Transverse colon (tissue), 4 donors: ENCODE measurements at regions of chr17 and their contacts with region 1.

Region 1: GRCh38 chr17:145671-146541 is 8.5 kb downstream of the SCGB1C2 start:
- DNase-seq: no peak
- H3K4me3 ChIP-seq: no peak overlapping the region
- H3K27ac ChIP-seq: no peak overlapping the region
- H3K4me1 ChIP-seq: peaks cover 0 to 3% (median 1%) of the 10 kb centered on the region in 4 donors
- H3K27me3 ChIP-seq: no peaks in the 10 kb centered on the region
- CTCF ChIP-seq: no peak
- EP300 ChIP-seq: no peak
- POLR2A ChIP-seq: no peak

Region 2: GRCh38 chr17:333626-334396 is 187.9 kb after region 1 on chr17:
- in situ Hi-C with region 1: no loop called
- intact Hi-C with region 1: no loop called
- DNase-seq: peak; percentile 67
- H3K4me3 ChIP-seq: peak overlapping the region in 1 of 4 donors; percentile 29
- H3K27ac ChIP-seq: peak overlapping the region; percentile 66 to 82 (median 68)
- H3K4me1 ChIP-seq: peaks cover 0 to 20% (median 11%) of the 10 kb centered on the region in 4 donors
- H3K27me3 ChIP-seq: no peaks in the 10 kb centered on the region
- CTCF ChIP-seq: no peak
- EP300 ChIP-seq: no peak
- POLR2A ChIP-seq: peak; percentile 35

Region 3: DNA sequence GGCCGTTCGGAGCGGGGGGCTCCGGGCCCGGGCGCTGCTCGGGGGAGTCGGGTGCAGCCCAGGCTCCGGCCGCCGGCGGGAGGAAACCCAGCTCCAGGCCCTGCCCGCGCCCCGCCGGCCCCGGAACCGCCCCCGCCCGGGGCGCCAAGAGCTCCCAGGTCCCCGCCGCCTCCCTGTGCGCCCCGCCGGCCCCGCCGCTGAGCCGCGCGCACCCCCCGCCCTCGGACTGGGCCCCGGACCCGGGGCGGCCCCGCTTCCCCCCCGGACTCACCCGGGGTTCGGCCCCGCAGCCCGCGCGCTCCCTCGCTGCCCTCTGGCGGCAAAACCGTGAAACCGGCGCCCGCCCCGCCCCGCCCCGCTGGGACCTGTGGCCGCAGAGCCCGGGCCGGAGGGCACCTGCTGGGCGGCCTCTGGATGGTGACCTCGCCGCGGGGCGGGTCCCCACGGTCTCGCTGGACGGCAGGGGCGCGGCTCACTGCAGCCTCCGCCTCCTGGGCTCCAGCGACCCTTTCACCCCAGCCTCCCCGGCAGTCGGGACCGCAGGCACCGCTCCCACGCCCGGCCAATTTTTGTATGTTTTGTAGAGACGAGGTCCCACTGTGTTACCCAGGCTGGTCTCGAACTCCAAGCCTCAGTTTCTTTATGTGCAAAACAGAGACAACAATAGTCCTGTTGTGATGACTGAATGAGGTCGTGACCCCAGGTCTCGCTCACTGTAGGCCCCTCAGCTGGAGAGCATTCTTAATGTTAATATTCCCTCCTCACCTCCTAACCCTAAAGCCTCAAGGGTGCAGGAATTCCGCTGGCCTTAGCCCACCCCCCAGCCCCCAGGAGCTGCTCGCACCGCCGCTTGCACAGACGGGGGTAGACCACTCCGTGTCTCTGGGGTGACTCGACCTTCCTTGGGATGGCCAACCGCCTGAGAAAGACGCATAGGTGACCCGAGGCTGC is 240.3 kb after region 1 on chr17:
- in situ Hi-C with region 1: no loop called
- intact Hi-C with region 1: loop called (anchors 5 kb)
- DNase-seq: peak; percentile 87
- H3K4me3 ChIP-seq: peak overlapping the region; percentile 47 to 77 (median 66)
- H3K27ac ChIP-seq: peak overlapping the region; percentile 59 to 88 (median 83)
- H3K4me1 ChIP-seq: peaks cover 8 to 13% (median 11%) of the 10 kb centered on the region in 4 donors
- H3K27me3 ChIP-seq: peaks cover 3% of the 10 kb centered on the region
- CTCF ChIP-seq: peak; percentile 22 to 83 (median 67)
- EP300 ChIP-seq: no peak
- POLR2A ChIP-seq: no peak

Region 4: DNA sequence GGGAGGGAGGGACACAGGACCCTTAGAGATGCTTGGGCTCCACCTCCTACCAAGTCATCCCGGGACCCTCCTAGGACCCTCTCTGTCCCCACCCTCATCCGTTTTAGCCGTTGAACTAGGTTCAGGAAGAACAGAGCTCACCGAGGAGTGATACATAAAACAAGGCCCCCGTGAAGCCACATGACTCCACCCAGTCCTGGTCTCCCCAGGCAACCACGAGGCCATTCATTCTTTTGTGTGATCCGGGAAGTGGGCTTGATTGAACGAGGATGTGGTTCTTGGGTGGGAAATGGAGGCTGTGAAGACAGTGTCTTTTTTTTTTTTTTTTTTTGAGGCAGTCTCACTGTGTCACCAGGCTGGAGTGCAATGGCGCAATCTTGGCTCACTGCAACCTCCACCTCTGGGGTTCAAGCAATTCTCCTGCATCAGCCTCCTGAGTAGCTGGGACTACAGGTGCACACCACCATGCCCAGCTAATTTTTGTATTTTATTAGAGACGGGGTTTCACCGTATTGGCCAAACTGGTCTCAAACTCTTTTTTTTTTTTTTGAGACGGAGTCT is 1148.3 kb after region 1 on chr17:
- in situ Hi-C with region 1: no loop called
- intact Hi-C with region 1: loop called (anchors 5 kb)
- DNase-seq: peak; percentile 52
- H3K4me3 ChIP-seq: no peak overlapping the region
- H3K27ac ChIP-seq: no peak overlapping the region
- H3K4me1 ChIP-seq: peaks cover 0 to 10% (median 3%) of the 10 kb centered on the region in 4 donors
- H3K27me3 ChIP-seq: peaks cover 27% of the 10 kb centered on the region
- CTCF ChIP-seq: no peak
- EP300 ChIP-seq: no peak
- POLR2A ChIP-seq: no peak